Esophagus muscularis mucosa (tissue), 4 donors: ENCODE measurements at regions of chrX and their contacts with region 1.

Region 1: DNA sequence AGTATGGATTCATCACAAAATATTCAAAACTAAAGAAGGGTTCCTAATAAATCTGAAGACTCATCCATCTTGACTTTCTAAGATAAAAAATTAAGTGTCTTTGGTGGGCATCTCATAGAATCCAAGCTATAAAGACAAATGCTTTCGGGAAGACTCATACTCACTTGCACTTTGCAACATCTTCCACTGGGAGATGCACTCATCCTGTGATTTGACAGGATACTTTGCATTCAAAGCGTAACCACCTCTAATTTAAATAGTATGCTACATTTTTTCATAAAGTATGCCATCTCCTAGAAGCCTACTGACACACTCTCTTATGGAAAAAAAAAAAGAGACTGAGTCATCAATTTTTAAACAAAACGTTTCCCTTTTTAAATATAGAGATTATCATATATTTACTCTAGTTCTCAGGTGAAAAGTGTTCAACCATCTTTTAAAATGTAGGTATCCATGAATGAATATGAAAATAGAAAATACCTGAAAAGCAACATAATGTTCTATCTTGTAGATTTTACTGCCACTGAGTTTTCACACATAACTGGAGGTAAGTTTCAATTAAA is 119.6 kb downstream of the KLHL13 start:
- DNase-seq: no peak
- H3K4me3 ChIP-seq: no peak overlapping the region
- H3K27ac ChIP-seq: no peak overlapping the region
- H3K4me1 ChIP-seq: no peaks in the 10 kb centered on the region
- H3K27me3 ChIP-seq: no peaks in the 10 kb centered on the region
- CTCF ChIP-seq: peak; percentile 19 to 48 (median 30)
- EP300 ChIP-seq: no peak
- POLR2A ChIP-seq: no peak

Region 2: GRCh38 chrX:118226090-118226428 is 229.1 kb after region 1 on chrX:
- intact Hi-C with region 1: loop called (anchors 10 kb)
- DNase-seq: no peak
- H3K4me3 ChIP-seq: no peak overlapping the region
- H3K27ac ChIP-seq: no peak overlapping the region
- H3K4me1 ChIP-seq: peaks cover 0 to 12% (median 0%) of the 10 kb centered on the region in 4 donors
- H3K27me3 ChIP-seq: no peaks in the 10 kb centered on the region
- CTCF ChIP-seq: peak; percentile 34 to 50 (median 35)
- EP300 ChIP-seq: no peak
- POLR2A ChIP-seq: no peak

Region 3: GRCh38 chrX:118254611-118255010 is 257.6 kb after region 1 on chrX:
- intact Hi-C with region 1: loop called (anchors 10 kb)
- DNase-seq: no peak
- H3K4me3 ChIP-seq: no peak overlapping the region
- H3K27ac ChIP-seq: no peak overlapping the region
- H3K4me1 ChIP-seq: peaks cover 0 to 4% (median 0%) of the 10 kb centered on the region in 4 donors
- H3K27me3 ChIP-seq: no peaks in the 10 kb centered on the region
- CTCF ChIP-seq: peak; percentile 62 to 70 (median 63)
- EP300 ChIP-seq: no peak
- POLR2A ChIP-seq: no peak